ENCODE measurements at regions of chr3 and their contacts with region 1.

Region 1: DNA sequence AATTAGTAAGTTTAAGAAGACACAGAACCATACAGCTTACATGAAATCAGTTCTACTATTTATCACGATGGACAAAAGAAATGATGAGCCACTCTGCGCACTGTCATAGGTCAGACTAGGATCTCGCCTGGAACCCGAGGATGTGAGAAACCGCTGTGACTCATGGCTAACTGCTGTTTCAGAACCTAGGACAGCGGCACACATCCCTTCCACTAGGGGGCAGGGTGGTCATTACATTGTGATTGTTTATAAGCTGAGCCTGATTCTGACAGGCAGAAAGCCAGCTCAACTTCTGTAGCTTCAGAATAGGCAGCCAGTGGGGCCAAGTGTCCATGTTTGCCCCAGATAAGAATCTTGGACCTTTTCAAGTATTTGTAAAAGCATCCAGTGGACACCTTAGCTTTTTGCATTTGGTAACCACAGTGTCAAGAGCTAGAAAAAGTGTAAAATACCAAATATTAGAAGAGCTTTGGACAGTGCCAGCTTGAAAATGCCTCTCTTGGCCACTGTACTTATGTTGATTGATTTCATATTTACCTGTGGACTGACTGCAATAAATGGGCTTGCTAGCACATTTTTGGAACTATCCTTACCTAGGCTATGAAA is 115.8 kb downstream of the KBTBD8 start:
- DNase-seq: peak; percentile 29 to 78 (median 65)
- ATAC-seq: peak; percentile 93
- H3K4me3 ChIP-seq: no peak overlapping the region
- H3K4me3 Mint-ChIP-seq: no peak overlapping the region
- H3K27ac ChIP-seq: no peak overlapping the region
- H3K27ac Mint-ChIP-seq: no peak overlapping the region
- H3K4me1 ChIP-seq: no peaks in the 10 kb centered on the region
- H3K4me1 Mint-ChIP-seq: peaks cover 0 to 6% (median 0%) of the 10 kb centered on the region in 7 donors
- H3K27me3 ChIP-seq: no peaks in the 10 kb centered on the region
- H3K27me3 Mint-ChIP-seq: peaks cover 7 to 31% (median 21%) of the 10 kb centered on the region in 5 donors

Region 2: GRCh38 chr3:66998113-66998903 is 115.6 kb before region 1 on chr3 and contains the start of gene KBTBD8:
- CTCF ChIA-PET with region 1: no interaction called
- POLR2A ChIA-PET with region 1: no interaction called
- intact Hi-C with region 1: loop called in 1 of 2 experiments (anchors 5 kb)
- DNase-seq: peak; percentile 87 to 99 (median 98)
- ATAC-seq: peak; percentile 97
- H3K4me3 ChIP-seq: peak within 1 kb of the TSS; percentile 69
- H3K4me3 Mint-ChIP-seq: peak within 1 kb of the TSS; percentile 85 to 99 (median 96)
- H3K27ac ChIP-seq: peak within 1 kb of the TSS; percentile 75
- H3K27ac Mint-ChIP-seq: peak within 1 kb of the TSS; percentile 68 to 96 (median 93)
- H3K4me1 ChIP-seq: peaks cover 7 to 19% of the 10 kb centered on the region in 2 donors
- H3K4me1 Mint-ChIP-seq: peaks cover 4 to 39% (median 27%) of the 10 kb centered on the region in 7 donors
- H3K27me3 ChIP-seq: no peaks in the 10 kb centered on the region
- H3K27me3 Mint-ChIP-seq: peaks cover 10 to 33% (median 27%) of the 10 kb centered on the region in 5 donors
- total RNA-seq, gene KBTBD8: 4.5 to 14.6 (median 9.5) TPM

Region 3: DNA sequence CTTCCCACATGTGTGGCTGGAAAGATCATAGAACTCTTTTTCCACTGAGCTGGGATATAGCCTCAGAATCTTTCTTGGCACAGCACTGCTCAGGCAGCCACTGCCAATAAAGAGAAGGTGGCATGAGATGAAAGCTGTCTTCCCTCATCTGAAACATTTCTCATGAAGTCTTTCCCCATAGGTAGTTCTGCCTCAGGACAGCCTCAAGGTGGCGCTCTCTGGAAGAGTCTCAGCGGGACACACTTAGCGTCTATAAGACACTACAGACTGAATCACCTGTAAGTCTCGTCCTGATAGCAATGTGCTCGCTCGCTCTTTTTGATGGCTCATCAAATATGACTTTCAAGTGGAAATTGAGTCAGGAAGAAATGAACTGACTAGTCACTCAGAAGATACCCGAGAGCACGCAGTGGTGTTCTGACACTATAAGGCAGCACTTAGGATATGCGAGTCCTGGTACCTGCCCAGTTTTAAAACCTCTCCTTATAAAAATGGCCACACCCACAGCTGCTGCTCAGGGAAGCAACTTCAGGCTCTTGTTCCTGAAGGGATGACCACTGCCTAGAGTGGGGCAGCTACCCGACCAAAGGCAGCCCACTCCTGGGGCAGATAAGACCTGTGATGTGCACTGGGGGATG is 271.0 kb after region 1 on chr3:
- CTCF ChIA-PET with region 1: interaction called, 7 read pairs
- POLR2A ChIA-PET with region 1: no interaction called
- intact Hi-C with region 1: loop called in 1 of 2 experiments (anchors 5 kb)
- DNase-seq: peak in 6 of 9 donors; percentile 16 to 47 (median 42)
- ATAC-seq: peak; percentile 55
- H3K4me3 ChIP-seq: no peak overlapping the region
- H3K4me3 Mint-ChIP-seq: no peak overlapping the region
- H3K27ac ChIP-seq: no peak overlapping the region
- H3K27ac Mint-ChIP-seq: peak overlapping the region in 4 of 9 donors; percentile 0 to 19 (median 14)
- H3K4me1 ChIP-seq: no peaks in the 10 kb centered on the region
- H3K4me1 Mint-ChIP-seq: peaks cover 7 to 34% (median 18%) of the 10 kb centered on the region in 7 donors
- H3K27me3 ChIP-seq: no peaks in the 10 kb centered on the region
- H3K27me3 Mint-ChIP-seq: no peaks in the 10 kb centered on the region

Region 4: GRCh38 chr3:67901681-67902080 is 787.8 kb after region 1 on chr3:
- CTCF ChIA-PET with region 1: interaction called, 3 read pairs
- POLR2A ChIA-PET with region 1: no interaction called
- intact Hi-C with region 1: loop called in 1 of 2 experiments (anchors 5 kb)
- DNase-seq: peak in 5 of 9 donors; percentile 17 to 31 (median 24)
- ATAC-seq: peak; percentile 31
- H3K4me3 ChIP-seq: no peak overlapping the region
- H3K4me3 Mint-ChIP-seq: no peak overlapping the region
- H3K27ac ChIP-seq: no peak overlapping the region
- H3K27ac Mint-ChIP-seq: no peak overlapping the region
- H3K4me1 ChIP-seq: peaks cover 0 to under 1% of the 10 kb centered on the region in 2 donors
- H3K4me1 Mint-ChIP-seq: peaks cover 0 to 19% (median 13%) of the 10 kb centered on the region in 7 donors
- H3K27me3 ChIP-seq: no peaks in the 10 kb centered on the region
- H3K27me3 Mint-ChIP-seq: no peaks in the 10 kb centered on the region

Region 5: DNA sequence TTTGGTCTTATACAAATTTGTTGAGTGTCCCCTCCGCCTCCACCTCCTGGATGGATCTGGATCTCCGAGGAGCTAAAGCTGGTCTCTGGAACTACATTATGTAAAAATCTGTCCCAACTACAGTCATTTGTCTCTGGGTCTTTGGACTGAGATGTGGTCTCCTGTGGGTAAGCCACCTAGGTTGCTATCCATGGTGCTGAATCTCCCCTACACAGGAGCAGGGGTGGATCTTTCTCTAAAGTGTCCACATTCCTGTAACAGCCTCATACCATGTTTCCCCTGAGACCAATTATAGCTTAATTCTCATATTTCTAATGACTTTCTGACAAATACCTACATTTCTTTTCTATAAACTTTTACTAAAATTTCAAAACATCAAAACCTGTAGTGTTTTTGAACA is 1192.7 kb after region 1 on chr3:
- CTCF ChIA-PET with region 1: no interaction called
- POLR2A ChIA-PET with region 1: no interaction called
- intact Hi-C with region 1: loop called in 1 of 2 experiments (anchors 5 kb)
- DNase-seq: peak in 5 of 9 donors; percentile 8 to 43 (median 18)
- ATAC-seq: no peak
- H3K4me3 ChIP-seq: no peak overlapping the region
- H3K4me3 Mint-ChIP-seq: no peak overlapping the region
- H3K27ac ChIP-seq: no peak overlapping the region
- H3K27ac Mint-ChIP-seq: no peak overlapping the region
- H3K4me1 ChIP-seq: no peaks in the 10 kb centered on the region
- H3K4me1 Mint-ChIP-seq: no peaks in the 10 kb centered on the region
- H3K27me3 ChIP-seq: no peaks in the 10 kb centered on the region
- H3K27me3 Mint-ChIP-seq: no peaks in the 10 kb centered on the region

Region 6: DNA sequence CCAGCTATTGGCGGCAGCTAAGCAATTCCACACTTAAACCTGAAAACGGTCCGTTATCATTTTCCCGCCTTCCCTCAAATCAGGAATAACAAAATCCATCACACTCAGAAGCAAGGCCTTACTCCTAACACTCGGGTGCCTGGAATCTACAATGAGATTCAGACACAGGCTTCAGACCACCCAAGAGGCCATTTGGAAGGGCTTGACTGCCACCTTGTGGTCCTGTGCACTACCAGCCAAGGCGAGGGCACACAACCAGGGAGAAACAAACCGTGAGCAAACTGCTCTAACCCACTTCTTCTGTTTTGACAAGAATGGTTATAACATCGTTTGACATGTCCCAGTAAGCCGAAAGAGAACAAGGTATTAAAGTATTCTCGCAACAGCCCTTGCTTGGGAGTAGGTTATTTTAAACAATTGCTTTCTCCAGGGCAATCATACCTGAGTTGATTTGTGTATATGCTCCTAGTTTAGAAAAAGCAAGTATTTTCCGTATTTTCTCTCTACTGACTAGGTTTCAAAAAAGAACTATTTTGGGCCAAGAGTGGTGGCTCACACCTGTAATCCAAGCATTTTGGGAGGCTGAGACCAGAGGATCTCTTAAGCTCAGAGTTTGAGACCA is 1858.6 kb after region 1 on chr3:
- CTCF ChIA-PET with region 1: no interaction called
- POLR2A ChIA-PET with region 1: no interaction called
- intact Hi-C with region 1: loop called in 1 of 2 experiments (anchors 2 kb)
- DNase-seq: peak in 3 of 9 donors; percentile 0 to 19 (median 6)
- ATAC-seq: peak; percentile 54
- H3K4me3 ChIP-seq: no peak overlapping the region
- H3K4me3 Mint-ChIP-seq: no peak overlapping the region
- H3K27ac ChIP-seq: no peak overlapping the region
- H3K27ac Mint-ChIP-seq: no peak overlapping the region
- H3K4me1 ChIP-seq: no peaks in the 10 kb centered on the region
- H3K4me1 Mint-ChIP-seq: peaks cover 0 to 1% (median 0%) of the 10 kb centered on the region in 7 donors
- H3K27me3 ChIP-seq: no peaks in the 10 kb centered on the region
- H3K27me3 Mint-ChIP-seq: peaks cover 0 to 20% (median 0%) of the 10 kb centered on the region in 5 donors